ENCODE measurements at regions of chr17 and their contacts with region 1.

Region 1: GRCh38 chr17:57130761-57131461 is 45.9 kb downstream of the AKAP1 start:
- DNase-seq: peak; percentile 79 to 87 (median 83)
- ATAC-seq: peak; percentile 89 to 93 (median 92)
- H3K4me3 ChIP-seq: peak overlapping the region in 2 of 12 donors; percentile 26 to 32
- H3K27ac ChIP-seq: no peak overlapping the region
- H3K4me1 ChIP-seq: peaks cover 0 to 7% (median 0%) of the 10 kb centered on the region in 12 donors
- H3K27me3 ChIP-seq: no peaks in the 10 kb centered on the region
- CTCF ChIP-seq: peak; percentile 85 to 95 (median 90)
- POLR2A ChIP-seq: no peak

Region 2: GRCh38 chr17:57178839-57179238 is 47.9 kb after region 1 on chr17:
- intact Hi-C with region 1: no loop called
- DNase-seq: no peak
- ATAC-seq: no peak
- H3K4me3 ChIP-seq: no peak overlapping the region
- H3K27ac ChIP-seq: no peak overlapping the region
- H3K4me1 ChIP-seq: no peaks in the 10 kb centered on the region
- H3K27me3 ChIP-seq: no peaks in the 10 kb centered on the region
- CTCF ChIP-seq: no peak
- POLR2A ChIP-seq: no peak

Region 3: DNA sequence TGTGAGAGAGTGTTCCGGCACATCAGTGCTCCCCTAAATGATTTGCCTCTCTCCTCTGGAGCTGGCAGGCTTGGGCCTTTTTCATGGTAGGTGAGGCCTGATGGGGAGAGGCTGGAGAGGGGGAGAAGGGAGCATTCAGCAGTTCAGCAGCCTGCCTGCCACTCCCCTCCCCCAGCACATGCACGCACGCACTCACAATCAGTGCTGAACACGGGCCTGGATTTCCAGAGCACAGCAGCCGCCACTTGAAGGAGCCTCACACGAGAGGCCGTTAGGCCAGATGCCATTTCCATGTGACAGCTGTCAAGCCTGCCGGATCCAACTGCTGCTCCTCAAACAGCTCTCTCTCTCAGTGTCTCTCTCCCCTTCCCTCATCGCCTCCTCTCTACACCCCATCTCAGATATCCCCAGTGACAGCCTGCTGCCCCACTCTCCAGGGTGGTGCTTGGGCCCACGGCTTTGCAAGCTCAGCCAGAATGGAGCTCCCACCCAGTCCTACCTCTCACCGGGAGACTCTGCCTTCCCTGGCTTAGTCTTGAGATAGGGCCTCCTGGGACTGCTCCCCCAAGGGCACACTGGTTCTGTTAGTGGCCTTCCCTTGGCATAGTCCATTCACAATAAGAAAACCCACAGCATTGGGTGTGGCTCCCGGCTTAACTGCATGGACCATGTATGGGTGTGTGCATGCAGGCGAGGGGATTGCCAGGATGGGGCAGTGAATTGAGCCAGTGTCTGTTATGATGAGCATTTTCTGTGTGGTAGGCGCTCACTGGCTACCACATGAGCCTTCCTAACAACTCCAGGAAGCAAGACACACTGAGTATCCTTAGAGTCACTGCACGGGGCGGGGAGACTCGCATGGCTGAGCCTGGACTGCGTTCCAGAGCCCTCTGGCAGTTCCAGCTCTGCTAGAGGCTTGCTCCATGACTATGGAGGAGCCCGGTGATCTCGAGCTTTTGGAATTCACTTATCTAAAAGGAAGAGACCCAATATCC is 388.0 kb after region 1 on chr17:
- intact Hi-C with region 1: loop called in 1 of 10 experiments (anchors 5 kb)
- DNase-seq: peak in 4 of 5 donors; percentile 58 to 87 (median 74)
- ATAC-seq: peak; percentile 66 to 90 (median 88)
- H3K4me3 ChIP-seq: no peak overlapping the region
- H3K27ac ChIP-seq: peak overlapping the region in 5 of 12 donors; percentile 32 to 61 (median 52)
- H3K4me1 ChIP-seq: peaks cover 0 to 52% (median 23%) of the 10 kb centered on the region in 12 donors
- H3K27me3 ChIP-seq: no peaks in the 10 kb centered on the region
- CTCF ChIP-seq: no peak
- POLR2A ChIP-seq: no peak

Region 4: DNA sequence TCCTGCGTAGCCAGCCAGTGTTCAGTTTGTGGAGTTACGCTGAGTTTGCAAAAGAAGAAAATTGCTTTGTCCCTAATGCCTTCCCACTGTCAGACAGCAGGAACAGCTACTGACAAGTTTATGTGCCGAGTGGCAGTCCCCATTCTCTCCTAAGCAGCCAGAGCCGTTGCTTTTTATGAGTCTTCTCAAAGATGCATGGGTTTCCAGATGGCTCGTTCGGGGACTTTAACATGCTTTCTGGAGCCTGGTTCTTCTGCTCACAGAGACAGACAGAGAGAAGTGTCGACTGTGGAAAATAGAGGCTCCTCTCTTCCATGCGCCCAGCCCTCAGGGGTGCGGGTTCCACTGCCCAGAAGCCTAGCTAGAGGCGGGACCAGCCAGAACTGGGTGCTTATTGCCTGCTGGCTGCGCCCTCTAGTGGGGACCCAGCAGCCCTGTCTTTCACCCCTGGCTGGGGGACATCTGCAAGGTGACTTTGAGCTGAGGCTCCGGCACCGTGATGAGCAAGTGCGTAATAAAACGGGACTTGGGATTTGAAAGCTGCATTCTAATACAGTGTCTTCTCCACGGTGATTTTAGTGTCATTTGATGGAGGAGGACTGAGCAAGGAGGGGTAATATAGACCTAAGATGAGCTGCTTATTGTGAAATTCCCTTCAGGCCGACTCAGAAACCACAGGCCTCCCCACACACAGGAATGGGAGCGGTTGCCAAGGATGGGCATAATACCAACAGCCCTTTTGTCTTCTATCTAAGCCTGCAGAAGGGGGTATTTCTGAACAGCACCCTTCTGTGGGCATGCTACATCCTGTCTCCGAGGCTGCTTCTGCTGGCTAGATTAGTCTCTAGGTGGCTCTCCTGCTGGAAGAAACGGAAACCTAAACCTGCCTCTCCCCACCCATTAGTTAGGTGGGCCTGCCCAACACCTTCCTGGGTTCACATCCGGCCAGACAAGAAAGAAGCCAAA is 541.0 kb after region 1 on chr17:
- intact Hi-C with region 1: loop called in 6 of 10 experiments (anchors 5 to 10 kb)
- DNase-seq: peak; percentile 80 to 87 (median 82)
- ATAC-seq: peak; percentile 78 to 91 (median 88)
- H3K4me3 ChIP-seq: no peak overlapping the region
- H3K27ac ChIP-seq: peak overlapping the region in 2 of 12 donors; percentile 8 to 35
- H3K4me1 ChIP-seq: peaks cover 0 to 28% (median 10%) of the 10 kb centered on the region in 12 donors
- H3K27me3 ChIP-seq: no peaks in the 10 kb centered on the region
- CTCF ChIP-seq: peak; percentile 87 to 97 (median 96)
- POLR2A ChIP-seq: no peak

Region 5: GRCh38 chr17:57747221-57748017 is 616.5 kb after region 1 on chr17:
- intact Hi-C with region 1: loop called (anchors 1 to 5 kb)
- DNase-seq: no peak
- ATAC-seq: peak; percentile 37 to 62 (median 44)
- H3K4me3 ChIP-seq: no peak overlapping the region
- H3K27ac ChIP-seq: no peak overlapping the region
- H3K4me1 ChIP-seq: peaks cover 0 to 7% (median 0%) of the 10 kb centered on the region in 12 donors
- H3K27me3 ChIP-seq: peaks cover 0 to 3% (median 0%) of the 10 kb centered on the region in 9 donors
- CTCF ChIP-seq: peak; percentile 51 to 83 (median 74)
- POLR2A ChIP-seq: no peak